ENCODE measurements at regions of chr7 and their contacts with region 1.

Region 1: DNA sequence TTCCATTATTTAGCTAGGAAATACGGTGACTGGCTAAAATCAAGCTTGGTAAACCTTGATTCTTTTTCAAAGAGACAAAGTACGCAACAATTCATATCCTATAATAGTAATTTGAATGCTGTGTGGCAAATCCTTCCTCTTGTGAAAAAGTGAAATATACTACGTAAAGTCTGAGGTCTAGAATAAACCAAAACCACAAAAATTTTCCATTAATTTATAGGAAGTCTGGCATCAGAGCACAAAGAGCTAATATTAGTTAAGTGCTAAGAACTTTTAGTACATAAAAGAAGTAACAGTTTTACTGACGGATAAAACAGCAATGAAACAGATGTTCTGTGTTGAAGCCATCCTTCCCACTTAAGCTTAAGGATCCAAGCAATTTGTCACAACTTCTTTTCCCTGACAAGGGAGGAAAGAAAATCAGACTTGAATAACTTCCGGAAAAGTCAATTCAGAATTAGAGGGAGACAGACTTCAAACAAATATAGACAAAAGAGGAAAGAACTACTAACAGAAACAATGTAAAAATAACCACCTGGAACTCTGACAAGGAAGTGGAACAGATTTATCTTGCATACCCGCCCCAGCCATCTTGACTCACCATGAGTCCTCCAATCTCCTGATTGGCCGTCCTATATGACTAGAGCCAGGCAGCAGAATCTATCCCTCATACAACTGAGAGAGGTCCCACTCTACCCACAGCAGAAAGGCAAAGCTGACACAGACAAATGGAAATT is 34.6 kb downstream of the RHEB start:
- DNase-seq: no peak
- H3K4me3 ChIP-seq: no peak overlapping the region
- H3K27ac ChIP-seq: no peak overlapping the region
- H3K4me1 ChIP-seq: no peaks in the 10 kb centered on the region
- H3K27me3 ChIP-seq: no peaks in the 10 kb centered on the region
- CTCF ChIP-seq: no peak
- EP300 ChIP-seq: no peak
- POLR2A ChIP-seq: no peak

Region 2: DNA sequence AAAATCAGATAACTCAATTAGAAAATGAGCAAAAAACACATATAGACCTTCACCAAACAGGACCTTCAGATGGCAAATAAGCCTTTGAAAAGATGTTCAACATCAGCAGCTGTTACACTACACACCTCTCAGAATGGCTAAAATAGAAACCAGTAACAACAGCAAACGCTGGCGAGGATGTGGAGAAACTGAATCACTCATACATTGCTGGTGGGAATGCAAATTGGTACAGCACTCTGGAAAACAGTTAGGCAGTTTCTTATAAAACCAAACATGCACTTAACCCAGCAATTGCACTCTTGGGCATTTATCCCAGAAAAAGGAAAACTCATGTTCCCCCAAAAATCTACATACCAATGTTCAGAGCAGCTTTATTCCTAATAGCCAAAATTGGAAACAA is 199.0 kb before region 1 on chr7:
- intact Hi-C with region 1: no loop called
- DNase-seq: no peak
- H3K4me3 ChIP-seq: no peak overlapping the region
- H3K27ac ChIP-seq: no peak overlapping the region
- H3K4me1 ChIP-seq: peaks cover 2% of the 10 kb centered on the region
- H3K27me3 ChIP-seq: no peaks in the 10 kb centered on the region
- CTCF ChIP-seq: no peak
- EP300 ChIP-seq: no peak
- POLR2A ChIP-seq: no peak

Region 3: GRCh38 chr7:151381348-151382078 is 103.6 kb before region 1 on chr7:
- intact Hi-C with region 1: no loop called
- DNase-seq: peak in 3 of 5 donors; percentile 44 to 47 (median 46)
- H3K4me3 ChIP-seq: peak overlapping the region; percentile 12
- H3K27ac ChIP-seq: no peak overlapping the region
- H3K4me1 ChIP-seq: peaks cover 10% of the 10 kb centered on the region
- H3K27me3 ChIP-seq: peaks cover 3% of the 10 kb centered on the region
- CTCF ChIP-seq: no peak
- EP300 ChIP-seq: no peak
- POLR2A ChIP-seq: no peak

Region 4: GRCh38 chr7:151470711-151471110 is 14.4 kb before region 1 on chr7:
- intact Hi-C with region 1: loop called in 1 of 4 experiments (anchors 2 kb)
- DNase-seq: no peak
- H3K4me3 ChIP-seq: no peak overlapping the region
- H3K27ac ChIP-seq: no peak overlapping the region
- H3K4me1 ChIP-seq: no peaks in the 10 kb centered on the region
- H3K27me3 ChIP-seq: no peaks in the 10 kb centered on the region
- CTCF ChIP-seq: no peak
- EP300 ChIP-seq: no peak
- POLR2A ChIP-seq: no peak